GM12878 (cell line): ENCODE measurements at regions of chr13 and their contacts with region 1.

Region 1: DNA sequence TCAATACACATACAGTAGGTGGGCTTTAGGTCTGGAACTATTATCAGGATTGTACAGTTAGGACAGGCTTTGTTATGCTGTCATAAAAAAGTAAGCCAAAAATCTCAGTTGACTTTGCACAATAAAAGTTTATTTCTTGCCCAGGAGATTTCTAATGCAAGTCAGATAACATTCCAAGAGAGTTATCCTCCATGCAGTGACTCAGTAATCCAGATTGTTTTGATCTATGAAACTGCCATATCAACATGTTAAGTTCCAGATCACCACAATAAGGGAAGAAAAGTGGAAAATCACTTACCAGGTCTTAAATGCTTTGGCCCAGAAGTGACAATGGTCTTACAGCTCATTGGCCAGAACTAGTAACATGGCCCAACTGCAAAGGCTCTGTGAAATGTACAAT is 636.2 kb upstream of the KLF12 start:
- DNase-seq: no peak
- ATAC-seq: no peak
- H3K4me3 ChIP-seq: no peak overlapping the region
- H3K27ac ChIP-seq: no peak overlapping the region
- H3K4me1 ChIP-seq: no peaks in the 10 kb centered on the region
- H3K27me3 ChIP-seq: no peaks in the 10 kb centered on the region
- CTCF ChIP-seq: no peak
- EP300 ChIP-seq: no peak
- POLR2A ChIP-seq: no peak
- RAD21 ChIP-seq: no peak

Region 2: DNA sequence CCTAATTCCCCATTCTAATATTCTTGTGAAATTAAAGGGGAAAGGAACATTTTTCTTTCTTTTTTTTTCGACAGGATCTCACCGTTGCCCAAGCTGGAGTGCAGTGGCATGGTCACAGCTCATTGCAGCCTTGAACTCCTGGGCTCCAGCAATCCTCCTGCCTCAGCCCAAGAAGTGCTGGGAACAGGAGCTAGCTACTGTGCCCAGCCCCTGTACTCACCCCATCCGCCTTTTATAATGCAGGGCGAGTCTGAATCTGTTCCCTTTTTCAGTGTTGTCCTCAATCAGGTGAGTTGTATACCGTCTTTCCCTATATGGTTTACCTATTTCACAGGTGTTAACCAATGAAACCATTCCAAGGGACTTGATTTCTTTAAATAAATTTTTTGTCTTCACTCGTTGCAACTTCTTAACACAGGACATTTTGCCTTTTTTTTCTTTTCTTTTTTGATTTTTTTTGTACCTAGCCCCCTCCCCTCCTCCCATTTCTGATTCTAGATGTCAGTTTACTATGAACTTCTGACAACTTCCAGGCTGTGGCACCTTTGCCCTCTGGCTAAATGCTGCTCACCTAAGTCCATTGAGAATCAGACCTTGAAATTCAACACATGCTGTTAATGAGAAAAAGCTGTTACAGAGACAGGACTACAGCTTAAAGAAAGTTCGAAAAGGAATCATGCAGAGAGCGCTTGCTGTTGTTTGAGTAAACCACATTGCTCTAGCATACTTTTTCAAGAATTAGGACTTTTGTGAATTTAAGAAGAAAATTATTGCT is 74.0 kb before region 1 on chr13:
- CTCF ChIA-PET with region 1: no interaction called
- POLR2A ChIA-PET with region 1: no interaction called
- RAD21 ChIA-PET with region 1: no interaction called
- SMC1A ChIA-PET with region 1: no interaction called
- in situ Hi-C with region 1: no loop called
- intact Hi-C with region 1: no loop called
- DNase-seq: no peak
- ATAC-seq: no peak
- H3K4me3 ChIP-seq: no peak overlapping the region
- H3K27ac ChIP-seq: no peak overlapping the region
- H3K4me1 ChIP-seq: no peaks in the 10 kb centered on the region
- H3K27me3 ChIP-seq: no peaks in the 10 kb centered on the region
- CTCF ChIP-seq: no peak
- EP300 ChIP-seq: no peak
- POLR2A ChIP-seq: no peak
- RAD21 ChIP-seq: no peak

Region 3: GRCh38 chr13:74819549-74819948 is 49.2 kb after region 1 on chr13:
- CTCF ChIA-PET with region 1: no interaction called
- POLR2A ChIA-PET with region 1: no interaction called
- RAD21 ChIA-PET with region 1: no interaction called
- SMC1A ChIA-PET with region 1: no interaction called
- in situ Hi-C with region 1: no loop called
- intact Hi-C with region 1: loop called (anchors 1 kb)
- DNase-seq: no peak
- ATAC-seq: no peak
- H3K4me3 ChIP-seq: no peak overlapping the region
- H3K27ac ChIP-seq: no peak overlapping the region
- H3K4me1 ChIP-seq: no peaks in the 10 kb centered on the region
- H3K27me3 ChIP-seq: no peaks in the 10 kb centered on the region
- CTCF ChIP-seq: no peak
- EP300 ChIP-seq: no peak
- POLR2A ChIP-seq: no peak
- RAD21 ChIP-seq: no peak